Endothelial cell of umbilical vein (primary cell): ENCODE measurements at regions of chr3 and their contacts with region 1.

Region 1: GRCh38 chr3:101069901-101070798 is 76.9 kb upstream of the ABI3BP start:
- DNase-seq: peak; percentile 46
- H3K4me3 ChIP-seq: no peak overlapping the region
- H3K27ac ChIP-seq: peak overlapping the region; percentile 88
- H3K4me1 ChIP-seq: peaks cover 67% of the 10 kb centered on the region
- H3K27me3 ChIP-seq: no peaks in the 10 kb centered on the region
- CTCF ChIP-seq: peak; percentile 55 to 72
- POLR2A ChIP-seq: no peak

Region 2: GRCh38 chr3:100899440-100900091 is 170.6 kb before region 1 on chr3:
- CTCF ChIA-PET with region 1: interaction called, 4 read pairs
- POLR2A ChIA-PET with region 1: no interaction called
- dilution Hi-C with region 1: no loop called
- intact Hi-C with region 1: loop called (anchors 1 kb)
- DNase-seq: peak; percentile 92
- H3K4me3 ChIP-seq: peak overlapping the region in 1 of 3 experiments; percentile 38
- H3K27ac ChIP-seq: peak overlapping the region; percentile 84
- H3K4me1 ChIP-seq: peaks cover 61% of the 10 kb centered on the region
- H3K27me3 ChIP-seq: no peaks in the 10 kb centered on the region
- CTCF ChIP-seq: no peak
- POLR2A ChIP-seq: peak; percentile 19

Region 3: DNA sequence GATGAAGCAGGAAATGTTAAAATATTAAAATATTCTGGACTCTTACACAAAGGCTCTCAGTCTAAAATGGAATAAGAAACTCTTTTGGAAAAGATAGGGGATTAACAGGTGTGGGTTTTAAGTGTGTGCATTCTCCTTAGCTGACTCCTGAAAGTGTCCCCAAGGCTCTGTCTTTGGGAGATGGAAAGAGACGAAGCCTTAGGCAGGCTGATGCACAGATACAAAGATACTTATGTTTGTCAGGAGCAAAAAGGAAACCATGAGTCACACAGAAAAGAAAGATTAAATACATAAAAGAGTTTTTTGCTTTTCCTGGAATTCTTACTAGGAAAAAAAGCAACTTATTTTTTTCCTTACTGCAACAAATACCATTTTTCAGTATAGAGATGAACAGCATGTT is 53.1 kb before region 1 on chr3:
- CTCF ChIA-PET with region 1: interaction called, 3 read pairs
- POLR2A ChIA-PET with region 1: no interaction called
- dilution Hi-C with region 1: no loop called
- intact Hi-C with region 1: loop called (anchors 2 kb)
- DNase-seq: peak; percentile 80
- H3K4me3 ChIP-seq: peak overlapping the region in 1 of 3 experiments; percentile 23
- H3K27ac ChIP-seq: peak overlapping the region; percentile 48
- H3K4me1 ChIP-seq: peaks cover 19% of the 10 kb centered on the region
- H3K27me3 ChIP-seq: no peaks in the 10 kb centered on the region
- CTCF ChIP-seq: no peak
- POLR2A ChIP-seq: no peak

Region 4: DNA sequence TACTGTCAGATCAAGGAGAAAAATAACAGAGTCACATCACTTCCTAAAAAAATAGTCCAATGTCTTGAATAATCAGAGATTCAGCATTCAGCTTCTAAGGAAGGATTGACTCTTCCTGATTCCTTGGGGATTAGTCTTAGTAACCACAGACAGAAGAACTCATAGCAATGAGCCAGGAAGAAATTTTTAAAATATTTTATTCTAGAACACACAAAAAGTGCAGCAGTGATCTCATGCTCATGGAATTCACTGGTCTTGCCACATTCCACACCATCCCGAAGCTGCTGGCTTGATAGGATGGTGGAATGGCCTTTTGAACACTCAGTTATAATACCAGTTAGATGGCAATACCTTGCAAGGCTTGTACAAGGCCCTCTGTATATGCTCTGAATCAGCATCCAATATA is 33.9 kb before region 1 on chr3:
- CTCF ChIA-PET with region 1: interaction called, 6 read pairs
- POLR2A ChIA-PET with region 1: interaction called, 3 read pairs
- dilution Hi-C with region 1: no loop called
- intact Hi-C with region 1: loop called (anchors 1 kb)
- DNase-seq: peak; percentile 84
- H3K4me3 ChIP-seq: no peak overlapping the region
- H3K27ac ChIP-seq: peak overlapping the region; percentile 79
- H3K4me1 ChIP-seq: peaks cover 18% of the 10 kb centered on the region
- H3K27me3 ChIP-seq: no peaks in the 10 kb centered on the region
- CTCF ChIP-seq: no peak
- POLR2A ChIP-seq: peak; percentile 52

Region 5: DNA sequence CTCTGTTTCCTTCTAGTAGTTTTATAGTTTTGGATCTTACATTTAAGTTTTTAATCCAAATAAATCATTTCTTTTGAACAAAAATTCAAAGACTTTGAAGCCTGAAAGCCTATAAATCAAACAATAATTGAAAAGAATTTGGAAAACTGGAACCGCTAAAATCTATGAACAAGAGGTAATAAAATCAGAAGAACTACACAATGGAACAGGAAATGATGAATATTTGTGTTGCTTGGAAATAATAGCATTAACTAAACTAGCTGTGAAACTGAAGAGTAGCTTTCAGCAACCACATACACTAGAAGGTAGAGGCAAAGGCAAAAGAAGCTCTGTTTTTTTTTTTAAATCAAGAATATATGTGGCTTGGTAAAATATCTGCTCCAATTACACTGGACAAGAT is 71.0 kb after region 1 on chr3:
- CTCF ChIA-PET with region 1: interaction called, 4 read pairs
- POLR2A ChIA-PET with region 1: no interaction called
- dilution Hi-C with region 1: no loop called
- intact Hi-C with region 1: loop called (anchors 2 kb)
- DNase-seq: peak; percentile 74
- H3K4me3 ChIP-seq: no peak overlapping the region
- H3K27ac ChIP-seq: peak overlapping the region; percentile 86
- H3K4me1 ChIP-seq: peaks cover 21% of the 10 kb centered on the region
- H3K27me3 ChIP-seq: no peaks in the 10 kb centered on the region
- CTCF ChIP-seq: no peak
- POLR2A ChIP-seq: no peak